HCT116 (cell line): ENCODE measurements at regions of chr12 and their contacts with region 1.

Region 1: GRCh38 chr12:53508534-53509199 is 1.4 kb upstream of the NPFF start:
- DNase-seq: no peak
- ATAC-seq: peak; percentile 98
- H3K4me3 ChIP-seq: no peak overlapping the region
- H3K27ac ChIP-seq: 0 out of 2 replicates have a peak overlapping the region, but pooled peaks have one; percentile 23
- H3K4me1 ChIP-seq: peaks cover 0 to 6% of the 10 kb centered on the region in 2 experiments; a peak in 1 of 4 replicates
- H3K27me3 ChIP-seq: no peaks in the 10 kb centered on the region
- CTCF ChIP-seq: peak in 2 of 3 experiments; percentile 94 to 95; a peak in 4 of 6 replicates
- POLR2A ChIP-seq: no peak
- RAD21 ChIP-seq: no peak

Region 2: GRCh38 chr12:53327435-53328042 is 181.1 kb before region 1 on chr12:
- CTCF ChIA-PET with region 1: interaction called, 14 read pairs
- POLR2A ChIA-PET with region 1: no interaction called
- RAD21 ChIA-PET with region 1: no interaction called
- intact Hi-C with region 1: loop called (anchors 1 kb)
- DNase-seq: no peak
- ATAC-seq: no peak
- H3K4me3 ChIP-seq: no peak overlapping the region
- H3K27ac ChIP-seq: no peak overlapping the region
- H3K4me1 ChIP-seq: peaks cover 11 to 33% of the 10 kb centered on the region in 2 experiments
- H3K27me3 ChIP-seq: no peaks in the 10 kb centered on the region
- CTCF ChIP-seq: peak; percentile 29 to 84 (median 52); a peak in 4 of 6 replicates
- POLR2A ChIP-seq: no peak
- RAD21 ChIP-seq: peak; percentile 84

Region 3: GRCh38 chr12:53419761-53420160 is 88.9 kb before region 1 on chr12:
- CTCF ChIA-PET with region 1: interaction called, 7 read pairs
- POLR2A ChIA-PET with region 1: no interaction called
- RAD21 ChIA-PET with region 1: interaction called in 1 of 2 experiments, 5 read pairs
- intact Hi-C with region 1: loop called (anchors 2 kb)
- DNase-seq: no peak
- ATAC-seq: no peak
- H3K4me3 ChIP-seq: no peak overlapping the region; a peak in 1 of 4 replicates
- H3K27ac ChIP-seq: peak overlapping the region; percentile 95; the same call in 1 of the 2 replicates
- H3K4me1 ChIP-seq: peaks cover 16 to 26% of the 10 kb centered on the region in 2 experiments
- H3K27me3 ChIP-seq: no peaks in the 10 kb centered on the region
- CTCF ChIP-seq: no peak
- POLR2A ChIP-seq: no peak
- RAD21 ChIP-seq: no peak

Region 4: GRCh38 chr12:53631721-53632120 is 123.1 kb after region 1 on chr12:
- CTCF ChIA-PET with region 1: no interaction called
- POLR2A ChIA-PET with region 1: no interaction called
- RAD21 ChIA-PET with region 1: no interaction called
- intact Hi-C with region 1: no loop called
- DNase-seq: no peak
- ATAC-seq: no peak
- H3K4me3 ChIP-seq: no peak overlapping the region
- H3K27ac ChIP-seq: no peak overlapping the region
- H3K4me1 ChIP-seq: peaks cover 0 to 6% of the 10 kb centered on the region in 2 experiments; a peak in 3 of 4 replicates
- H3K27me3 ChIP-seq: no peaks in the 10 kb centered on the region
- CTCF ChIP-seq: no peak
- POLR2A ChIP-seq: no peak
- RAD21 ChIP-seq: no peak

Region 5: GRCh38 chr12:54017878-54018467 is 509.3 kb after region 1 on chr12:
- CTCF ChIA-PET with region 1: no interaction called
- POLR2A ChIA-PET with region 1: no interaction called
- RAD21 ChIA-PET with region 1: no interaction called
- intact Hi-C with region 1: no loop called
- DNase-seq: peak; percentile 84
- ATAC-seq: peak; percentile 80
- H3K4me3 ChIP-seq: peak overlapping the region; percentile 76 to 88
- H3K27ac ChIP-seq: peak overlapping the region; percentile 94
- H3K4me1 ChIP-seq: peaks cover 24 to 44% of the 10 kb centered on the region in 2 experiments
- H3K27me3 ChIP-seq: no peaks in the 10 kb centered on the region
- CTCF ChIP-seq: no peak
- POLR2A ChIP-seq: peak; percentile 56
- RAD21 ChIP-seq: no peak